Transverse colon (tissue), 4 donors: ENCODE measurements at regions of chr11 and their contacts with region 1.

Region 1: DNA sequence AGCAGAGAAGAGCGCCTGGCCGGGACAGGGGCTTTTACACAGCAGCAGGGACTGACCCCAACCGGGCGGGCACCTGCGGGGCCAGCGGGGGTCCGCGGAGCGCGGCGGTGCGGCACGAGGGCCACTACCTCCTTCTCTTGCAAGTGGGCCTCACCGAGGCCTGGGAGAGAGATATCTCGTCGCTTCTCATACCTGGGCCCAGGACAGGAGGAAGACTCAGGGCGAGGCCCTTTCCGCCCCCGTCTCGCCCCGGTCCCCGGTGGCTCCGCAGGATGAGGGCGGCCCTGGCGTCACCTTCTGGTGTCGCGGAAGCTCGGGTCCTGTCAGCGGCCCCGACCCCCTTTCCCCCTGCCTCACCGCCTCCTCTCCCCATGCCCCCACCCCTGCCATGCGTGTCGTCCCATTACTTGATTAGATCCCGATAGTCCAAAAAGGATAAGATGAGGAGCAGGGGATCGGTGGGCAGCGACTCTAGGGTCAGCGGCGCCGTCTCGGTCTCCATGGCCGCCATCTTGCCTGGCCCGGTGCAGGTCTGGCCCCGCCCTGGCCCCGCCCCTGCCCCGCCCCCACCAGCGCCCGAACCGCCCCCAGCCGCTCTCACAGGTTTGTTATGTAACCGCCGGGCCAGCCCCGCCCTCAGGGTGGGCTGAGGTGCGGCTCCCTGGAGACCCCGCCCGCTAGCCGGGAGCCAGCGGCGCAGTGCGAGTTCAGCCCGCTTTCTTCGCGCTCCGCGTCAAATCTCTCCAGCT is at the start of gene FBXO3:
- DNase-seq: peak; percentile 91
- H3K4me3 ChIP-seq: peak within 1 kb of the TSS; percentile 80 to 96 (median 90)
- H3K27ac ChIP-seq: peak within 1 kb of the TSS; percentile 83 to 88 (median 84)
- H3K4me1 ChIP-seq: peaks cover 14 to 34% (median 28%) of the 10 kb centered on the region in 4 donors
- H3K27me3 ChIP-seq: peaks cover 17% of the 10 kb centered on the region
- CTCF ChIP-seq: no peak
- EP300 ChIP-seq: no peak
- POLR2A ChIP-seq: peak; percentile 50
- total RNA-seq, gene FBXO3: 9.0 to 48.5 (median 30.7) TPM

Region 2: GRCh38 chr11:32571039-32571438 is 1203.1 kb before region 1 on chr11:
- in situ Hi-C with region 1: no loop called
- intact Hi-C with region 1: no loop called
- DNase-seq: no peak
- H3K4me3 ChIP-seq: no peak overlapping the region
- H3K27ac ChIP-seq: no peak overlapping the region
- H3K4me1 ChIP-seq: no peaks in the 10 kb centered on the region
- H3K27me3 ChIP-seq: no peaks in the 10 kb centered on the region
- CTCF ChIP-seq: no peak
- EP300 ChIP-seq: no peak
- POLR2A ChIP-seq: no peak

Region 3: DNA sequence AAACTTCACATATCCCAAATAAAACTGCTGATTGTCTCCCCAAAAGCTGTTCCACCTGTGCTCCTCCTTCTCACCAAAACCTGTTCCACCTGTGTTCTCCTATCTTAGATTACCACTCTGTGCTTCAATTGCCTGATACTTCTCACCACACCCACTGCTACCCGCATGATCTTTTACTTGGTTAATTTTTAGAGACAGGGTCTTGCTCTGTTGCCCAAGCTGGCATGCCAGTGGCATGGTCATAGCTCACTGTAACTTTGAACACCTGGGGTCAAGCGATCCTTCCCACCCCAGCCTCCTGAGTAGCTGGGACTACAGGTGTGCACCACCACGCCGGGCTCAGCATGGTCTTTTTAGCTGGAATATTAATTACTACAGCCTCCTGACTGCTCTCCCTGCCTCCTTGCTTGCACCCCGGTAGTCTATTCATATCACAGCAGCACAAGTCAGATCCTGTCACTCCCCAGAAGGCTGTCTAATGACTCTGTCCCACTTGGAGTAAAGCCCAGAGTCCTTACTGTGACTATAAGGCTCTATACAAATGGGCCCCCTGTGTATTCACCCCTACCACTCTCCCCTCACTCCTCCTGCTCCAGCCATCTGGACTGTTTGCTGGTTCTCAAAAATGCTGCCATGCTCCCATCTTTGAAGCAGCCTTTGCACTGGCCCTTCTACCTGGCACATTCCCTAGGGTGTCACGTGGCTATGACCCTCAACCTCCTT is 77.1 kb before region 1 on chr11:
- in situ Hi-C with region 1: no loop called
- intact Hi-C with region 1: loop called (anchors 2 kb)
- DNase-seq: no peak
- H3K4me3 ChIP-seq: no peak overlapping the region
- H3K27ac ChIP-seq: no peak overlapping the region
- H3K4me1 ChIP-seq: peaks cover 16 to 34% (median 31%) of the 10 kb centered on the region in 4 donors
- H3K27me3 ChIP-seq: no peaks in the 10 kb centered on the region
- CTCF ChIP-seq: no peak
- EP300 ChIP-seq: no peak
- POLR2A ChIP-seq: no peak

Region 4: GRCh38 chr11:33703771-33704170 is 70.4 kb before region 1 on chr11:
- in situ Hi-C with region 1: no loop called
- intact Hi-C with region 1: loop called (anchors 2 kb)
- DNase-seq: no peak
- H3K4me3 ChIP-seq: no peak overlapping the region
- H3K27ac ChIP-seq: peak overlapping the region; percentile 81 to 87 (median 86)
- H3K4me1 ChIP-seq: peaks cover 14 to 52% (median 42%) of the 10 kb centered on the region in 4 donors
- H3K27me3 ChIP-seq: no peaks in the 10 kb centered on the region
- CTCF ChIP-seq: no peak
- EP300 ChIP-seq: no peak
- POLR2A ChIP-seq: no peak